IMR-90 (cell line): ENCODE measurements at regions of chrX and their contacts with region 1.

Region 1: DNA sequence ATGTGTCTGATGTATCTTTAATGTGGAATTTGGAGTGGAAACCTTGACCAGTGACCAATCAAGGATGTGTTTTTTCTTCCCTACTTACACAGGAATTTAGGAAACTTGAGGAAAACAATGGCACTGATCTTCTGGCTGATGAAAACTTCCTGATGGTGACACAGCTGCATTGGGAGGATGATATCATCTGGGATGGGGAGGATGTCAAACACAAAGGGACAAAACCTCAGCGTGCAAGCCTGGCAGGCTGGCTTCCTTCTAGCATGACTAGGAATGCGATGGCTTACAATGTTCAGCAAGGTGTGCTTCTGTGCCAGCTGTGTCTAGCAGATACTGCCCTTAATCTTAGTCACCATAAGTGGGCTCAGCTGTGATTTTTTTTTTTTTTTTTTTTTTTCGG is 12.6 kb downstream of the TAF1 start:
- DNase-seq: no peak
- ATAC-seq: no peak
- H3K4me3 ChIP-seq: no peak overlapping the region
- H3K27ac ChIP-seq: no peak overlapping the region
- H3K4me1 ChIP-seq: no peaks in the 10 kb centered on the region
- H3K27me3 ChIP-seq: no peaks in the 10 kb centered on the region; the same call in 1 of the 2 replicates
- CTCF ChIP-seq: no peak
- POLR2A ChIP-seq: no peak
- RAD21 ChIP-seq: no peak

Region 2: GRCh38 chrX:70289793-70290776 is 1088.6 kb before region 1 on chrX and contains the starts of genes KIF4A and PDZD11:
- CTCF ChIA-PET with region 1: no interaction called
- POLR2A ChIA-PET with region 1: no interaction called
- dilution Hi-C with region 1: no loop called
- in situ Hi-C with region 1: no loop called
- intact Hi-C with region 1: no loop called
- DNase-seq: peak; percentile 76
- ATAC-seq: peak; percentile 99
- H3K4me3 ChIP-seq: peak within 1 kb of the TSS; percentile 56
- H3K27ac ChIP-seq: peak within 1 kb of the TSS; percentile 58
- H3K4me1 ChIP-seq: peaks cover 2% of the 10 kb centered on the region; the same call in 1 of the 2 replicates
- H3K27me3 ChIP-seq: no peaks in the 10 kb centered on the region; the same call in 1 of the 2 replicates
- CTCF ChIP-seq: no peak
- POLR2A ChIP-seq: peak; percentile 23; the same call in 1 of the 2 replicates
- RAD21 ChIP-seq: no peak
- total RNA-seq, gene KIF4A: 19.0 and 24.4 TPM in 2 replicates
- total RNA-seq, gene PDZD11: 66.4 and 84.1 TPM in 2 replicates

Region 3: DNA sequence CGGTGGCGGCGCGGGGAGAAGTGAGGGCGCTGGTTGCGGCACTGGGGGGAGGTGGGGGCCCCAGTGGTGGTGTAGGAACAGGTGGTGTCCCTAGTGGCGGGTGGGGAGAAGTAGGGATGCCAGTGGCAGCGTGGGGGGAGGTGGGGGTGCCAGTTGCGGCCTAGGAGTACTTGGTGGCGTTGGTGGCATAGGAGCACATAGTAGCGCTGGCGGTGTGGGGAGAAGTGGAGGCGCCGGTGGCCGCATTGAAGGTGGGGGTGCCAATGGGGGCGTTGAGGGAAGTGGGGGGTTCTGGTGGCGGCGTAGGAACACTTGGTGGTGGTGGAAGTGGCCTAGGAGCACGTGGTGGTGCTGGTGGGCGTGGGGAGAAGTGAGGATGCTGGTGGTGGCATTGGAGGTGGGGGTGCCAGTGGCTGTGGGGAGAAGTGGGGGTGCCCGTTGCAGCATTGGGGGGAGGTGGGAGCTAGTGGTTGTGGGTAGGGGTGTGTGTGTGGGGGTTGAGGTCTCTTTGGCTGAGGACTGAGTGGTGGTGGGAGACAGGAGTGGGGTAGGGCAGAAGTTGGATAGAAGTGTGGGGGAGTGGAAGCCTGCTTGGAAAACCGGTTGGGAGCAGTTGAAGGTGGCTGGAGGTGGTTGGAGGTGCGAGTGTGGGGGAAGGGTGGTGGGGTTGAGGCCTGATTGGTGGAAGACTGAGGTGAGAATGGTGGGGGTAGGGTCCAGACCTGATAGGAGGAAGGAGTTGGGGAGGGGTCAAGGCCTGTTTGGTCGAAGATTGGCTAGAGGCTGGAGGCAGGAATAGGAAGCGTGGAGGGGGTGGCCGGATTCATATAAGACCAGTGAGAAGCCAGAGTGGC is 200.6 kb after region 1 on chrX:
- CTCF ChIA-PET with region 1: no interaction called
- POLR2A ChIA-PET with region 1: no interaction called
- dilution Hi-C with region 1: no loop called
- in situ Hi-C with region 1: no loop called
- intact Hi-C with region 1: loop called (anchors 10 kb)
- DNase-seq: no peak
- ATAC-seq: no peak
- H3K4me3 ChIP-seq: no peak overlapping the region
- H3K27ac ChIP-seq: no peak overlapping the region
- H3K4me1 ChIP-seq: no peaks in the 10 kb centered on the region
- H3K27me3 ChIP-seq: no peaks in the 10 kb centered on the region; the same call in 1 of the 2 replicates
- CTCF ChIP-seq: no peak
- POLR2A ChIP-seq: no peak
- RAD21 ChIP-seq: no peak